Naive thymus-derived CD4-positive, alpha-beta T cell (primary cell): ENCODE measurements at regions of chr1 and their contacts with region 1.

Region 1: GRCh38 chr1:203320591-203321272 is 15.4 kb downstream of the BTG2 start:
- DNase-seq: peak in 8 of 9 donors; percentile 50 to 93 (median 88)
- ATAC-seq: peak; percentile 76
- H3K4me3 ChIP-seq: peak overlapping the region; percentile 41
- H3K4me3 Mint-ChIP-seq: peak overlapping the region; percentile 66 to 88 (median 80)
- H3K27ac ChIP-seq: peak overlapping the region; percentile 98
- H3K27ac Mint-ChIP-seq: peak overlapping the region; percentile 85 to 100 (median 99)
- H3K4me1 ChIP-seq: peaks cover 66 to 74% of the 10 kb centered on the region in 2 donors
- H3K4me1 Mint-ChIP-seq: peaks cover 77 to 95% (median 92%) of the 10 kb centered on the region in 7 donors
- H3K27me3 ChIP-seq: no peaks in the 10 kb centered on the region
- H3K27me3 Mint-ChIP-seq: no peaks in the 10 kb centered on the region

Region 2: DNA sequence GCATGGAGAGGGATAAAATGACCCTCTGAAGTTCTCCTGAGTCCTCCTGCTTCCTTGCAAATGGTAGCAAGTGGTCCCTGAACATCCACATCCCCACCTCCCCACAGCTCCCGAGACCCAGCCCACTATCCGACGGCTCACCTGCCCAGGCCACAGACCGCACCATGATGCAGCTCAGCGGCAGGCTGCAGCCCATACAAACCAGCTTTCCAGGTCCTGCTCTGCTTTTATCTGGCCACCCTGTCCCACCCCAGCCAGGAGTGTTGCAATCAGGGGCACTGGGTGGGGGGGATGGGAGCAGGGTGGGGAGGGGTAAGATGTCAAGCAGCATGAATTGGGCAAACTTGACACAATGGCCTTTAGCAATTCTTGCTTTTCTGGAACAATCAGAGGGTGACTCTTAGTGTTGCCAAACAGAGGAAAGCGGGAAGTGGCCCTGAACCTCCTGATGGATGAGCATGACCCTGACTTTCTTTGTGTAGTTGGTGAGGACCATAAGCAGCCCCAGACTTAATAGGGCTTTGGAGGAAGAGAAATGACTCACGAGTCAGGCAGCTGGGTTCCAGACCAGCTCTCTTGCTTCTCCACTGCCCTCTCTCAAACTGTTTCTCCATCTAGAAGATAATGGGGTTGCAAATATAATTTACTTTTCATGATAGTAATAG is 91.1 kb before region 1 on chr1 and contains the start of gene CHIT1:
- CTCF ChIA-PET with region 1: no interaction called
- POLR2A ChIA-PET with region 1: no interaction called
- intact Hi-C with region 1: no loop called
- DNase-seq: no peak
- ATAC-seq: no peak
- H3K4me3 ChIP-seq: no peak within 1 kb of the TSS
- H3K4me3 Mint-ChIP-seq: no peak within 1 kb of the TSS
- H3K27ac ChIP-seq: no peak within 1 kb of the TSS
- H3K27ac Mint-ChIP-seq: no peak within 1 kb of the TSS
- H3K4me1 ChIP-seq: no peaks in the 10 kb centered on the region
- H3K4me1 Mint-ChIP-seq: no peaks in the 10 kb centered on the region
- H3K27me3 ChIP-seq: no peaks in the 10 kb centered on the region
- H3K27me3 Mint-ChIP-seq: peaks cover 17 to 32% (median 18%) of the 10 kb centered on the region in 5 donors
- total RNA-seq, gene CHIT1: 0.76 to 2.2 (median 1.1) TPM

Region 3: DNA sequence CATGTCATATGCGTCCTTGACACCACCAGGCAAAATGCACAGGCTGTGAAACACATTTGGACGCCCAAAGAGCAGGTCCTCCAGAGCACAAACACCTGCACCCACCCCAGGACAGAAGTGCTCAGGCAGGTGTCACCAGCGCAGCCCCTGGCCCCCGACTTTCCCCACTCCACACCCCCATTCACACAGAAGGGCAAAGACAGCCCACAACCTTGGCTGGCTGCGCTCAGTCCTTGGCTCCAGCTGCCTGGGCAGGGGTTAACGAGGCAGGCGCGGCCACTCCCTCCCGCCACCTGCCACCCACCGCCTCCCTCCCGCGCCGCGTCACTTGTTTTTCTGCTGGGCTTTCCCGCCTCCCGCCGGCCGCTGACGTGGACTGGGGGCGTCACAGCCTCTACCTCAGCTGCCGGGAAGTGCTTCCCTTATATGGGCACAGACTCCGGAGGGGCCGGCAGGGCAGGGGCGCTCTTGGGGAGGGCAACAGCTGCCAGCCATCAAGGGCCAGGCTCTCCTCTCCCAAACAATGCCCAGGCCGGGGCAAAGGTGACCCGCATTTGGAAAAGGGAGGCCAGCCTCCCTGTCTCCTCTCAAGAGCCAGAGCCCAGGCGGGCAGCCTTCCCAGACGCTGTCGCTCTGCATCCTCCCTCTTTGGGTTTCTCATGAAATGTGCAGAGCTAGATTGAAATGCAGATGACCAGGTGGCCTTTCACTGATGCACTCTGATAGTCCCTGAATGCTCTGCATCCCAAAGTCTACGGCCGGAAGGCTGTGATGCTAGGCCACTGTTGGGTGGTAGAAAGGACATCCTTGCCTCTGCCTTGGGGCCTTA is 30.3 kb before region 1 on chr1:
- CTCF ChIA-PET with region 1: interaction called, 79 read pairs
- POLR2A ChIA-PET with region 1: interaction called, 1,812 read pairs
- intact Hi-C with region 1: loop called in 1 of 2 experiments (anchors 1 kb)
- DNase-seq: peak; percentile 95 to 98 (median 97)
- ATAC-seq: peak; percentile 76
- H3K4me3 ChIP-seq: peak overlapping the region; percentile 57
- H3K4me3 Mint-ChIP-seq: peak overlapping the region; percentile 75 to 89 (median 86)
- H3K27ac ChIP-seq: peak overlapping the region; percentile 98
- H3K27ac Mint-ChIP-seq: peak overlapping the region; percentile 97 to 100 (median 99)
- H3K4me1 ChIP-seq: peaks cover 54 to 58% of the 10 kb centered on the region in 2 donors
- H3K4me1 Mint-ChIP-seq: peaks cover 44 to 92% (median 86%) of the 10 kb centered on the region in 7 donors
- H3K27me3 ChIP-seq: no peaks in the 10 kb centered on the region
- H3K27me3 Mint-ChIP-seq: peaks cover 0 to 3% (median 0%) of the 10 kb centered on the region in 5 donors

Region 4: GRCh38 chr1:203304919-203305808 is 15.6 kb before region 1 on chr1 and contains the start of gene BTG2:
- CTCF ChIA-PET with region 1: interaction called, 137 read pairs
- POLR2A ChIA-PET with region 1: interaction called, 1,016 read pairs
- intact Hi-C with region 1: loop called in 1 of 2 experiments (anchors 1 kb)
- DNase-seq: peak; percentile 83 to 94 (median 89)
- ATAC-seq: peak; percentile 90
- H3K4me3 ChIP-seq: peak within 1 kb of the TSS; percentile 86
- H3K4me3 Mint-ChIP-seq: peak within 1 kb of the TSS; percentile 89 to 100 (median 96)
- H3K27ac ChIP-seq: peak within 1 kb of the TSS; percentile 100
- H3K27ac Mint-ChIP-seq: peak within 1 kb of the TSS; percentile 96 to 100 (median 99)
- H3K4me1 ChIP-seq: peaks cover 22 to 40% of the 10 kb centered on the region in 2 donors
- H3K4me1 Mint-ChIP-seq: peaks cover 54 to 65% (median 60%) of the 10 kb centered on the region in 7 donors
- H3K27me3 ChIP-seq: no peaks in the 10 kb centered on the region
- H3K27me3 Mint-ChIP-seq: no peaks in the 10 kb centered on the region
- total RNA-seq, gene BTG2: 141 to 654 (median 241) TPM

Region 5: DNA sequence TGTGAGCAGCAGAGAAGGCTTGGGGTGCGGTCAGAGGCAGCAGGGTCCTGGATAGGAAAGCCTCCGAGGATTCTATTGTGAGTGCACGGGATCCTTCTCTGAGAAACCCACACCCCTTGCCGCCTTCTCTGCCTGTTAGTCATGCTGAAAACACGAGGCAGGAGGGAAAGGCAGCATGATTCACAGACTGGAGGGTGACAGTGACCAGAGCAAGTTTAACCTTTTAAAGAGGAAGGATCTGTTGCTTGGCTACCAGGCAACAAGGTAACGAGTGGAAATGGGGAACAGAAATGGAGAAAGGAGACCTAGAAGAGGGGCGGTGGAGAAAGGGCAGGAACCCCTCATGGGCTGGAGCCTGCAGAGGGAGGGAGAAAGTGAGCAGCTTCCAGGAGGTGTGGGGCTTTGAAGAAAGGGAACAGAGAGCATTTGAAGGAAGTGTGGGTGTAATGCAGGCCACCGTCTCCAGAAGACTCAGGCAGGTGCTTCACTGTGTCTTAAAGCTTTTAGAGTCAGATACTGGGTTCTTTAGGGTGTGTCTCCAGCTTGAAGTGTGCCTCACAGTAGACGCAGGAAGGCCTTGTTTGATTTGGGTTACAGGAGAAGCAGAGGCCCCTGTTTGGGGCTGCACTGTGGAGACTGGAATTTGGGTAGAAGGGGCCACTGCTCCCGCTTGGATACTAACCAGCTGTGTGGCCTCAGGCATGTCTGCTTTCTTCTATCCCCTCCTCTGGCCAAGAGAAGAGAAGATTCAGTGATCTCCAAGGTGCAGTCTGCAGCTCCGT is 192.3 kb after region 1 on chr1:
- CTCF ChIA-PET with region 1: no interaction called
- POLR2A ChIA-PET with region 1: no interaction called
- intact Hi-C with region 1: no loop called
- DNase-seq: peak in 7 of 9 donors; percentile 37 to 67 (median 54)
- ATAC-seq: peak; percentile 81
- H3K4me3 ChIP-seq: peak overlapping the region; percentile 27
- H3K4me3 Mint-ChIP-seq: peak overlapping the region; percentile 41 to 93 (median 80)
- H3K27ac ChIP-seq: peak overlapping the region; percentile 68
- H3K27ac Mint-ChIP-seq: peak overlapping the region; percentile 85 to 98 (median 95)
- H3K4me1 ChIP-seq: peaks cover 0 to 28% of the 10 kb centered on the region in 2 donors
- H3K4me1 Mint-ChIP-seq: peaks cover 24 to 58% (median 52%) of the 10 kb centered on the region in 7 donors
- H3K27me3 ChIP-seq: no peaks in the 10 kb centered on the region
- H3K27me3 Mint-ChIP-seq: no peaks in the 10 kb centered on the region

Region 6: GRCh38 chr1:203612932-203613682 is 292.4 kb after region 1 on chr1:
- CTCF ChIA-PET with region 1: no interaction called
- POLR2A ChIA-PET with region 1: no interaction called
- intact Hi-C with region 1: loop called in 1 of 2 experiments (anchors 5 kb)
- DNase-seq: no peak
- ATAC-seq: no peak
- H3K4me3 ChIP-seq: no peak overlapping the region
- H3K4me3 Mint-ChIP-seq: peak overlapping the region in 1 of 10 donors; percentile 49
- H3K27ac ChIP-seq: no peak overlapping the region
- H3K27ac Mint-ChIP-seq: peak overlapping the region in 2 of 9 donors; percentile 58 to 76
- H3K4me1 ChIP-seq: peaks cover 0 to 6% of the 10 kb centered on the region in 2 donors
- H3K4me1 Mint-ChIP-seq: peaks cover 12 to 68% (median 18%) of the 10 kb centered on the region in 7 donors
- H3K27me3 ChIP-seq: no peaks in the 10 kb centered on the region
- H3K27me3 Mint-ChIP-seq: no peaks in the 10 kb centered on the region